ENCODE measurements at regions of chr10 and their contacts with region 1.

Region 1: DNA sequence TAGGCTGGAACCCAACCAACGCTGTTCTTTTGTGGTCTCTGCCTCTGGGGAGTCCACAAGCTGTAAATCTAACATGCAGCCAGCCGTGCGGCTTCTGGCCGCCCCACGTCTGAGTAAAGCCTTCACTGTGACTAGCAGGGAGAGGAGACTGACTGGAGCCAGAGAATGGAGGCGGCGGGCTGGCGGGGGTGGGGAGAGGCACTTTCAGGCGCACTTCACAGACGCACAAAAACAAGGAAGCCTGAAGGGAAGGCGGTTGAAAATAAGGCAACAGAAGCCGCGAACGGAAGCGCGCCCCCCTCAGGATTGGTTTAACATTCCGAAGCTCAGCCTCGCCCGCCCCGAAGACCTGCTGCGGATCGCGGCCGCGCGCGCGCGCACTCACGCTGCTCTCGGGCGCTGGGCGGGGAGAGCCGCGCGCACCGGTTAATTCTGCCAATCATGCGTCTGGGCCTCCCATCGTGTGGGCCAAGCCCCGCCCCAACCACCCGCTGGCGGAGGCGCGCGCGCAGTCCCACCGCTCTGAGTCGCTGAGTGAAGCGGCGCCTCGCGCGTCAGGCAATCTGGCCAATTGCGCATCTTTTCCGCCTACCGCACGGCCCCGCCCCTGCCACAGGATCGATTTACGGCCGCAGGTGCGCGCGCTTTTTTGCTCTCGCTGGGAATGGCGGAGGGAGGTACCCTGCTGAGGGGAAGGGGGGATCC is at the start of gene SFR1:
- DNase-seq: peak; percentile 100
- H3K4me3 ChIP-seq: peak within 1 kb of the TSS; percentile 81 to 91 (median 89)
- H3K27ac ChIP-seq: peak within 1 kb of the TSS; percentile 97
- H3K4me1 ChIP-seq: peaks cover 27% of the 10 kb centered on the region
- H3K27me3 ChIP-seq: no peaks in the 10 kb centered on the region
- CTCF ChIP-seq: peak; percentile 64 to 76
- POLR2A ChIP-seq: peak; percentile 77
- total RNA-seq, gene SFR1: 8.3 and 8.9 TPM in 2 replicates

Region 2: DNA sequence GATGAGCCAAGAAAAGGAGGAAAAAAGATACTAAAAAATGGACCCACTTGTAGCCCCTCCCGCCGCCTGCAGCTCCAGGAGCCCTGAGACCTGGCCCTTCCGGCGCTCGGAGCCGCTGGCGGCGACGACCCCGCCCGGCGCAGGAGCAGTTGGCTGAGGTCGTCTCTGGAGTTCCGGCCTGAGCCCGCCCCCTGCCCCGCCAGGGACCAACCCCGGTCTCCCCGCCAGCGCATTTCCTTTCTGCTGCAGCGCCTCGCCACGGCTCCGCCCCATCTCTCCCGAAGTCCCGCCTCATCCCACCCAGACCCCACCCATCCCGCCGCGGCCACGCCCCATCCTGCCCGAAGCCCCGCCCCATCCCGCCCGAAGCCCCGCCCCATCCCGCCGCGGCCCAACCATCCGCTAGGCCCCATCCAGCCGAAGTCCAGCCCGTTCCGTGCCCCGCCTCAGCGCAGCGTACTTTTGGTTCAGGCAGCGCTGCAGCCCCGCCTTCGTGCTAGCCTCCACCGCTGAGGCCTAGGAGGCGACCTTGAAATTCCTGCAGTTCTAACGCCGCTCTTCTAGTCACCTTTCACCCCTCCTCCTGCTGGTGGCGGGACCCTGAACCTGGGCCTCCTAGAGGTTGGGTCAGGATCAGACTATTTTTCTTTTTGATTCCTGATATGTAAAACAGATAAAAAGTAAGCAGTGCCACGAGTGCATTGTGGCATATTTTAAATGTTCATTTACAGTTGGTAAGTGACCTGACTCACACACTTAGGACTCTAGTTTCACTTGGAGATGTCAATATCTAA is 203.4 kb before region 1 on chr10 and contains the start of gene STN1:
- CTCF ChIA-PET with region 1: interaction called, 6 read pairs
- POLR2A ChIA-PET with region 1: interaction called, 4 read pairs
- dilution Hi-C with region 1: no loop called
- intact Hi-C with region 1: loop called (anchors 2 kb)
- DNase-seq: peak; percentile 96
- H3K4me3 ChIP-seq: peak within 1 kb of the TSS; percentile 15 to 63 (median 39)
- H3K27ac ChIP-seq: peak within 1 kb of the TSS; percentile 76
- H3K4me1 ChIP-seq: peaks cover 36% of the 10 kb centered on the region
- H3K27me3 ChIP-seq: no peaks in the 10 kb centered on the region
- CTCF ChIP-seq: no peak
- POLR2A ChIP-seq: peak; percentile 81
- total RNA-seq, gene STN1: 12.7 and 15.3 TPM in 2 replicates

Region 3: GRCh38 chr10:103983367-103983911 is 138.2 kb before region 1 on chr10:
- CTCF ChIA-PET with region 1: interaction called, 17 read pairs
- POLR2A ChIA-PET with region 1: no interaction called
- dilution Hi-C with region 1: no loop called
- intact Hi-C with region 1: loop called (anchors 1 kb)
- DNase-seq: peak; percentile 57
- H3K4me3 ChIP-seq: peak overlapping the region in 1 of 3 experiments; percentile 27
- H3K27ac ChIP-seq: peak overlapping the region; percentile 83
- H3K4me1 ChIP-seq: peaks cover 65% of the 10 kb centered on the region
- H3K27me3 ChIP-seq: no peaks in the 10 kb centered on the region
- CTCF ChIP-seq: no peak
- POLR2A ChIP-seq: no peak

Region 4: DNA sequence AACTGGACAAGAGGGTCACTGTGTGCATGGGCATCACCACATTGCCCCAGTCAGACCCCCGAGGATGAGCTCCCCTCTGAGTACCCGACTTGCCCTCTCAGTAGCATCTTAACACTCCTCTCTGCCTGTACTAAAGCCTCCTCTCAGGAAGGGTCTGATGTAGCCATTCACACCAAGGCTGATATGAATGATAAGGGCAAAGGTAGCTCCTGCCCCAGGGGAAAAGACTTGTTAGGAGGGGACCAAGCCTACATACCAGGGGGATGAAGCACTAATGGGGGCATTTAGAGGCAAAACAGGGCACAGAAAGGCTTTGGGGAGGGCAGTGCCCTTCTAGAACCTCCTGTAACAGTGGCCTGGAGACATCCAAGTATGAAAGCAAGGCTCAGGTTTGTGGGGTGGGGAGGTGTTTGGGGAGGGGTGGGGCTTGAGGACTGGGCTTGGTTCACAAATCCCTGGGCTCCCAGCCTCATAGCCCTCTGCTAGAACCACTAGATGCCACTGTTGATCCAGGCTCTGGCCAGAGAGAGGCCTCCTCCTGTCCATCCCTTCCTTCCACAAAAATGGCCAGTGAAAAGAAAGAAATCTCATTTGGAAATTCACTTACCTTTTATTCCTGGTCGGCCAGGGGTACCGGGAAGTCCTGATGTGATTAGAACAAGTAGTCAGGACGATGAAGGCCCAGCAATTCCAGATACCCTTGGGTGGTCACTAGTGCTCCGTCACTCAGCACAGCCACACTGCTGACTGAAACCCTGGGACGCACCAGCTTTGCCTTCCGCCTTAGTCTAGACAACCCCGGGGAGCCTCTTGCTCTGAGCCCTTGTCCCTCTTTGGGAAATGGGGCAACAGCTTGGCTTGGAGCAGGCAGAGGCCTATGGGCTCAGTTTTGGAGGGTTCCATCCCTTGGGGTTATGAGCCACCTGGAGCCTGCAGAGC is 76.3 kb before region 1 on chr10:
- CTCF ChIA-PET with region 1: interaction called, 87 read pairs
- POLR2A ChIA-PET with region 1: no interaction called
- dilution Hi-C with region 1: no loop called
- intact Hi-C with region 1: loop called (anchors 1 kb)
- DNase-seq: peak; percentile 76
- H3K4me3 ChIP-seq: no peak overlapping the region
- H3K27ac ChIP-seq: no peak overlapping the region
- H3K4me1 ChIP-seq: peaks cover 17% of the 10 kb centered on the region
- H3K27me3 ChIP-seq: no peaks in the 10 kb centered on the region
- CTCF ChIP-seq: peak; percentile 56 to 86
- POLR2A ChIP-seq: no peak

Region 5: DNA sequence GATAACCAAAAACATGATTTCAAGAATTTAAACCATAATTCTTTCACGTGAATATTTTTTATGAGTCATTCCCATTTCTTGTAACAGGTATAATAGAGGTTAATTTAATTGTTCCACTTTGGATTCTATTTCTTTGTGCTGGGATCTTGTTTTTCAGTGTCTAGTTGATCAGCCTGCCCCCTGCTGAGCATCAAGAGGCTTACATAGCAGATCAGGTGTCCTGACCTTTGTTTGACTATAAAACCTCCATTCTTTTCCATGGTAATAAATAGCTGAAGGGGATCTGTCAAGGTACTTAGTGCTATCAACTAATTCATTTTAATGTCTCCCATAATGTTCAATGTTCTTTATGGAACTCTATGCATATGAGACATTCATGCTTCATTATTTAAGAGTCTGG is 40.9 kb before region 1 on chr10:
- CTCF ChIA-PET with region 1: interaction called, 34 read pairs
- POLR2A ChIA-PET with region 1: no interaction called
- dilution Hi-C with region 1: no loop called
- intact Hi-C with region 1: loop called (anchors 1 kb)
- DNase-seq: peak; percentile 45
- H3K4me3 ChIP-seq: no peak overlapping the region
- H3K27ac ChIP-seq: no peak overlapping the region
- H3K4me1 ChIP-seq: peaks cover 18% of the 10 kb centered on the region
- H3K27me3 ChIP-seq: no peaks in the 10 kb centered on the region
- CTCF ChIP-seq: peak; percentile 46 to 49
- POLR2A ChIP-seq: no peak

Region 6: GRCh38 chr10:104254493-104255310 is 133.0 kb after region 1 on chr10 and contains the start of gene GSTO1:
- CTCF ChIA-PET with region 1: interaction called, 6 read pairs
- POLR2A ChIA-PET with region 1: no interaction called
- dilution Hi-C with region 1: no loop called
- intact Hi-C with region 1: loop called (anchors 2 kb)
- DNase-seq: peak; percentile 64
- H3K4me3 ChIP-seq: peak within 1 kb of the TSS; percentile 65 to 99 (median 82)
- H3K27ac ChIP-seq: peak within 1 kb of the TSS; percentile 99
- H3K4me1 ChIP-seq: peaks cover 44% of the 10 kb centered on the region
- H3K27me3 ChIP-seq: peaks cover 2% of the 10 kb centered on the region in 2 experiments
- CTCF ChIP-seq: no peak
- POLR2A ChIP-seq: peak; percentile 83
- total RNA-seq, gene GSTO1: 195 and 211 TPM in 2 replicates

Region 7: DNA sequence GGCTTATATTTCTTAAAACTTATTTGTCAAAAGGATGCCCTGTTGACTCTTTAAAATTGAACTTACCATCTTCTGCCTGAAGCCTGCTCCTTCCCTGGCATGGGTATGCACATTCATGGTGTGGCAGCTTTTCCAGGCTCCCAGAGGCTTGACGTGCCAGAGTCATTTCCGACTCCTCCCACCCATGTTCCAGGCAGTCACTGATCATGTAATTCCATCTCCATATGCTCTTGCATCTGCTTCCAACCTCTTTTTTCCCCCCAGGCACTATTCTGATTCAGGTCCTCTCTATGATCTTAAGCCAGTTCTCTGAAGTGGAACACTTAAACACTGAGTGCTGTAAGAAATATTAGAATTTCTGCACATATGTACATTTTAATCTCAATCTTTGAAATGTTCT is 314.1 kb after region 1 on chr10:
- CTCF ChIA-PET with region 1: no interaction called
- POLR2A ChIA-PET with region 1: no interaction called
- dilution Hi-C with region 1: no loop called
- intact Hi-C with region 1: no loop called
- DNase-seq: no peak
- H3K4me3 ChIP-seq: no peak overlapping the region
- H3K27ac ChIP-seq: no peak overlapping the region
- H3K4me1 ChIP-seq: no peaks in the 10 kb centered on the region
- H3K27me3 ChIP-seq: no peaks in the 10 kb centered on the region
- CTCF ChIP-seq: no peak
- POLR2A ChIP-seq: no peak

Measured in endothelial cell of umbilical vein (primary cell).